Mammary epithelial cell (primary cell): ENCODE measurements at regions of chr9 and their contacts with region 1.

Region 1: DNA sequence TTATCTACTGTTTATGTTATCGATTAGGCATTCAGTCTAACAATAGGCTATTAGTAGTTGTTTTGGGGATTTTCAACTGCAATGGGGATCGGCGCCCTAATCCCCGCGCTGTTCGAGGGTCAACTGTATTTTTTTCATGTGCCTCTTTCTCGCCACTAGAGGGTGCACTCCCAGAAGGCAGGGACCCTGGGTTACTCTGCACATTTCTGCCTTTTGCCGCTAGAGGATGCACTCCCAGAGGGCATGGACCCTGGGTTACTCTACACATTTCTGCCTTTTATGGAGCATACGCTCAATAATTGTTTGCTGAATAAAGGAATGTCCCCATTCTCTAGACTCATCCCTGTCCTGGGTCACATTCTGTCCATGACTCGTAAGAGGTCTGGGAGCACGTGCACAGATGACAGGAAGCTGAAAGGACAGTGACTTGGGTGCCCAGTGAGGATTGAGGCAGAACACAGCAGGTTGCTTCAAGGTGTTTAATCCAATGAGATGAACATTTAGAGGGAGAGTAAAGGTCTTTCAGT is 27.9 kb upstream of the RECK start:
- DNase-seq: peak; percentile 17
- H3K4me3 ChIP-seq: no peak overlapping the region
- H3K27ac ChIP-seq: no peak overlapping the region
- H3K4me1 ChIP-seq: no peaks in the 10 kb centered on the region
- H3K27me3 ChIP-seq: peaks cover 17% of the 10 kb centered on the region
- CTCF ChIP-seq: peak; percentile 100

Region 2: DNA sequence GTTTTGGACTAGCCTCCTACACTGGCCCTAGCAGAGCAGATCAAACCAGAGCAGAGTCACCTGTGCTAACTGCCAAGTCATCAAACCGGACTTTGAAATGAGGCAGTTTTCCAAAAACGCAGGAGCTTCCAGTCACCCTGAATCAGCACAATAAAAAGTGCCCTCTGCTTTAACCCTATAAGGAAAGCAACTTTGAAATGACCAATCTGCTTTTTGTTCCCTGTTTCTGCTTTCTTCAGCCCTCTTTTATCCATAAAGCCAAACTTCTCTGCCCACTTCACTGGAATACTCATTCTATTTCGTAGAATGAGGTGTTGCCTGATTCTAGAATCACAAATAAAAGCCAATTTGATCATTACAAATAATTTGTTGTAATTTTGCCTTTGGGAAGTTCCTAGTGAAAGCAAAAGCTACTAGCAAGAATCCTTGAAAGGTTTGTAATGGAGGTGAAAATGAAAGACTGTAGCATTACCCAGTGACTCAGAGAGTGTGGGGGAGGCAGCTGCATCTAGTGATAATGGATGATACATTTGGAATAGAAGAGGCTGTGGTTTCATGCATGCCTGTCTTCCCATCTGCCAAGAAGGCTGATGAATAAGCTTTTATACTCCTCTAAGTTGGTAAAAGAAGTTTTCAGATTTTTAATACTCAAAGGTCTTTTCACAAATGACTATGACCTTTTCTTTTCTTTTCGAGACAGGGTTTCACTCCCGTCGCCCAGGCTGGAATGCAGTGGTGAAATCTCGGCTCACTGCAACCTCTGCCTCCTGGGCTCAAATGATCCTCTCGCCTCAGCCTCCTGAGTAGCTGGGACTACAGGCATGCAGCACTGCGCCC is 84.7 kb before region 1 on chr9:
- CTCF ChIA-PET with region 1: no interaction called
- dilution Hi-C with region 1: loop called (anchors 5 kb)
- in situ Hi-C with region 1: no loop called
- intact Hi-C with region 1: no loop called
- DNase-seq: peak; percentile 91
- H3K4me3 ChIP-seq: peak overlapping the region in 2 of 3 experiments; percentile 25 to 36
- H3K27ac ChIP-seq: peak overlapping the region; percentile 90
- H3K4me1 ChIP-seq: peaks cover 28% of the 10 kb centered on the region
- H3K27me3 ChIP-seq: no peaks in the 10 kb centered on the region
- CTCF ChIP-seq: no peak

Region 3: GRCh38 chr9:35954942-35955546 is 53.8 kb before region 1 on chr9:
- CTCF ChIA-PET with region 1: no interaction called
- dilution Hi-C with region 1: no loop called
- in situ Hi-C with region 1: loop called in 1 of 2 experiments (anchors 10 kb)
- intact Hi-C with region 1: loop called (anchors 1 kb)
- DNase-seq: peak; percentile 63
- H3K4me3 ChIP-seq: no peak overlapping the region
- H3K27ac ChIP-seq: no peak overlapping the region
- H3K4me1 ChIP-seq: no peaks in the 10 kb centered on the region
- H3K27me3 ChIP-seq: no peaks in the 10 kb centered on the region
- CTCF ChIP-seq: peak; percentile 84 to 94

Region 4: GRCh38 chr9:35962126-35962906 is 46.5 kb before region 1 on chr9:
- CTCF ChIA-PET with region 1: interaction called, 3 read pairs
- dilution Hi-C with region 1: no loop called
- in situ Hi-C with region 1: loop called in 1 of 2 experiments (anchors 10 kb)
- intact Hi-C with region 1: loop called (anchors 2 kb)
- DNase-seq: no peak
- H3K4me3 ChIP-seq: no peak overlapping the region
- H3K27ac ChIP-seq: no peak overlapping the region
- H3K4me1 ChIP-seq: no peaks in the 10 kb centered on the region
- H3K27me3 ChIP-seq: no peaks in the 10 kb centered on the region
- CTCF ChIP-seq: no peak

Region 5: DNA sequence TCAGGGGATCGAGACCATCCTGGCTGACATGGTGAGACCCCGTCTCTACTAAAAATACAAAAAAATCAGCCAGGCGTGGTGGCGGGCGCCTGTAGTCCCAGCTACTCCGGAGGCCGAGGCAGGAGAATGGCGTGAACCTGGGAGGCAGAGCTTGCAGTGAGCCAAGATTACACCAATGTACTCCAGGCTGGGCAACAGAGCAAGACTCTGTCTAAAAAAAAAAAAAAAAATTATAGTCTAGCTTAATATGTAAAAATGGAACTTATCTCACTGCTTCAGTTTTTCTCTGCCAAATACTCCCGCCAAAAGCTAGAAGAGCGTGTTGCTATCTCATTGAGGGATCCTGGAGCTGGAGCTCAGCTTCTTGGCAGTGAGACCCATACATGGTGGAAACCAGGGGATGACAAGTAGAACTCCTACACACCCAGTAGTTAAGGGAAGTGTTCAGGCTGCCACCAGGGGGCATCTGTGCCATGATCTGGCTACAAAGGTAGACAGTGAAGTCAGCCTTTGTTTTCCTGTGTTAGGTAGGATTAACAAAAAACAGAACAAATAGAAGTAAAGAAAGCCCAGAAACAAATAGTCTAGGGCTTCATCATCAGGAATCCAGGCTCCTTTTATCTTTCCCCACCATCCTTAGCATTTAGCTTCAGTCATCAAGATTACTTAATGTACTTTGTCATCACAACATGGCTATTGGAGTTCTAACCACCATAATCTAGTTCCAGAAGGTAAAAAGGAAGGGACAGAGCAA is 94.1 kb after region 1 on chr9:
- CTCF ChIA-PET with region 1: no interaction called
- dilution Hi-C with region 1: loop called (anchors 5 kb)
- in situ Hi-C with region 1: no loop called
- intact Hi-C with region 1: loop called (anchors 2 kb)
- DNase-seq: peak; percentile 66
- H3K4me3 ChIP-seq: no peak overlapping the region
- H3K27ac ChIP-seq: no peak overlapping the region
- H3K4me1 ChIP-seq: peaks cover 10% of the 10 kb centered on the region
- H3K27me3 ChIP-seq: no peaks in the 10 kb centered on the region
- CTCF ChIP-seq: peak; percentile 82

Region 6: GRCh38 chr9:36110434-36110833 is 101.6 kb after region 1 on chr9:
- CTCF ChIA-PET with region 1: interaction called, 3 read pairs
- dilution Hi-C with region 1: no loop called
- in situ Hi-C with region 1: no loop called
- intact Hi-C with region 1: loop called (anchors 2 kb)
- DNase-seq: no peak
- H3K4me3 ChIP-seq: no peak overlapping the region
- H3K27ac ChIP-seq: no peak overlapping the region
- H3K4me1 ChIP-seq: no peaks in the 10 kb centered on the region
- H3K27me3 ChIP-seq: no peaks in the 10 kb centered on the region
- CTCF ChIP-seq: peak; percentile 9 to 39

Region 7: GRCh38 chr9:36166101-36166927 is 157.5 kb after region 1 on chr9:
- CTCF ChIA-PET with region 1: interaction called, 3 read pairs
- dilution Hi-C with region 1: no loop called
- in situ Hi-C with region 1: no loop called
- intact Hi-C with region 1: loop called (anchors 1 kb)
- DNase-seq: peak; percentile 71
- H3K4me3 ChIP-seq: peak overlapping the region; percentile 18 to 38 (median 25)
- H3K27ac ChIP-seq: no peak overlapping the region
- H3K4me1 ChIP-seq: peaks cover 5% of the 10 kb centered on the region
- H3K27me3 ChIP-seq: no peaks in the 10 kb centered on the region
- CTCF ChIP-seq: peak; percentile 58 to 88